Endothelial cell of umbilical vein (primary cell): ENCODE measurements at regions of chr10 and their contacts with region 1.

Region 1: DNA sequence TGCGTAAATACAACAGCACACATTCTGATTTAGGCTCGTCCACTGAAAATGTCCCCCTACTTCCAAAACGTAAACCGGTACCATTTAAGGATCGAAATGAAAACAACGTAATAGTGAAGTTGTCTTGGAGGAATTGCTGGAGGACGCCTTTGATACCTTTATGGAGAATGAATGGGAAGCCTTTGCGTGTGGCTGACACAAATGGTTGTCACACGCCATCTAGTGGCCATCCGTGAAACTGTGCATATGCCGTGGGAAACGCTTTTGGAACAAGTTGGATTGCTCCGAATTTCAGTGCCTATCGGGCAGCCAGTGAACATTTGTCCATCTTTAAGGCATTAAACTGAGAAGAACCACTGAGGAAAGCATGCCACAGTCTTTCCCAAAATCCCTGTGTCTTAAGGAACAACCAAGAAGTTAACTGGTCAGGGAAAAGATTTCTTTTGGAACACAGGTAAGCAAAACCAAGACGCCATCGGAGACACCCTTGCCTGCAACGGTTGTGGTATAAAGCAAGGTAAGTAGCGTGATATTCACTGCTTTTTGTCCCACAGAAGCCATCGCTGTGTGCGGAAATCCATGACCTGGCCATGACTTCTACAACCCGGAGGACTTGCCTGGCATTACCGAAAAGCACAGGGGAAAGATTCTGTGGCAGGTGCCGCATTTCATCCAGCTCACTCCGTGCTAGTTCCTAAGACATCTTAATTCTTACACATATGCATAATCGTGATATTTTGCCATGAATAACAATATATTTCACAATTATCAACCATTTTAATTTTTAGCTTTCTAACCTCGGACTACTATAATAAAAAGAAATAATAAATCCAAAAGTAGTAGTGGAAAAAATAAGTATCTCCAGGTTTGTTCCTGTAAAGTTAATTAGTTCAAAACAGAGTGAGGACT is 100.6 kb downstream of the FAM204A start:
- DNase-seq: peak; percentile 74
- H3K4me3 ChIP-seq: no peak overlapping the region
- H3K27ac ChIP-seq: no peak overlapping the region
- H3K4me1 ChIP-seq: no peaks in the 10 kb centered on the region
- H3K27me3 ChIP-seq: peaks cover 7 to 12% of the 10 kb centered on the region in 2 experiments
- CTCF ChIP-seq: peak; percentile 81 to 88
- POLR2A ChIP-seq: no peak

Region 2: GRCh38 chr10:117860823-117861222 is 380.7 kb before region 1 on chr10:
- CTCF ChIA-PET with region 1: no interaction called
- POLR2A ChIA-PET with region 1: no interaction called
- dilution Hi-C with region 1: no loop called
- intact Hi-C with region 1: loop called (anchors 1 kb)
- DNase-seq: peak; percentile 5
- H3K4me3 ChIP-seq: no peak overlapping the region
- H3K27ac ChIP-seq: no peak overlapping the region
- H3K4me1 ChIP-seq: no peaks in the 10 kb centered on the region
- H3K27me3 ChIP-seq: no peaks in the 10 kb centered on the region
- CTCF ChIP-seq: peak in 1 of 2 donors; percentile 19
- POLR2A ChIP-seq: no peak